ENCODE measurements at regions of chr1 and their contacts with region 1.

Region 1: GRCh38 chr1:18902523-18903290 is at the start of gene ALDH4A1:
- DNase-seq: peak; percentile 86 to 96
- ATAC-seq: peak; percentile 93 to 98 (median 94)
- H3K4me3 ChIP-seq: peak within 1 kb of the TSS; percentile 70
- H3K4me3 Mint-ChIP-seq: peak within 1 kb of the TSS; percentile 96
- H3K27ac ChIP-seq: peak within 1 kb of the TSS; percentile 91
- H3K27ac Mint-ChIP-seq: peak within 1 kb of the TSS; percentile 90 to 95
- H3K4me1 ChIP-seq: peaks cover 28% of the 10 kb centered on the region
- H3K4me1 Mint-ChIP-seq: peaks cover 25 to 28% of the 10 kb centered on the region in 2 donors
- H3K27me3 ChIP-seq: no peaks in the 10 kb centered on the region
- H3K27me3 Mint-ChIP-seq: no peaks in the 10 kb centered on the region
- CTCF ChIP-seq: no peak
- total RNA-seq, gene ALDH4A1: 3.4 to 4.1 (median 3.7) TPM

Region 2: GRCh38 chr1:18820791-18821641 is 81.7 kb before region 1 on chr1:
- intact Hi-C with region 1: no loop called
- DNase-seq: peak; percentile 54 to 73
- ATAC-seq: peak in 2 of 3 donors; percentile 54 to 62
- H3K4me3 ChIP-seq: no peak overlapping the region
- H3K4me3 Mint-ChIP-seq: no peak overlapping the region
- H3K27ac ChIP-seq: no peak overlapping the region
- H3K27ac Mint-ChIP-seq: peak overlapping the region in 1 of 2 donors; percentile 12
- H3K4me1 ChIP-seq: peaks cover 17% of the 10 kb centered on the region
- H3K4me1 Mint-ChIP-seq: peaks cover 30 to 45% of the 10 kb centered on the region in 2 donors
- H3K27me3 ChIP-seq: peaks cover 7% of the 10 kb centered on the region
- H3K27me3 Mint-ChIP-seq: peaks cover 29 to 37% of the 10 kb centered on the region in 2 donors
- CTCF ChIP-seq: peak; percentile 73

Region 3: DNA sequence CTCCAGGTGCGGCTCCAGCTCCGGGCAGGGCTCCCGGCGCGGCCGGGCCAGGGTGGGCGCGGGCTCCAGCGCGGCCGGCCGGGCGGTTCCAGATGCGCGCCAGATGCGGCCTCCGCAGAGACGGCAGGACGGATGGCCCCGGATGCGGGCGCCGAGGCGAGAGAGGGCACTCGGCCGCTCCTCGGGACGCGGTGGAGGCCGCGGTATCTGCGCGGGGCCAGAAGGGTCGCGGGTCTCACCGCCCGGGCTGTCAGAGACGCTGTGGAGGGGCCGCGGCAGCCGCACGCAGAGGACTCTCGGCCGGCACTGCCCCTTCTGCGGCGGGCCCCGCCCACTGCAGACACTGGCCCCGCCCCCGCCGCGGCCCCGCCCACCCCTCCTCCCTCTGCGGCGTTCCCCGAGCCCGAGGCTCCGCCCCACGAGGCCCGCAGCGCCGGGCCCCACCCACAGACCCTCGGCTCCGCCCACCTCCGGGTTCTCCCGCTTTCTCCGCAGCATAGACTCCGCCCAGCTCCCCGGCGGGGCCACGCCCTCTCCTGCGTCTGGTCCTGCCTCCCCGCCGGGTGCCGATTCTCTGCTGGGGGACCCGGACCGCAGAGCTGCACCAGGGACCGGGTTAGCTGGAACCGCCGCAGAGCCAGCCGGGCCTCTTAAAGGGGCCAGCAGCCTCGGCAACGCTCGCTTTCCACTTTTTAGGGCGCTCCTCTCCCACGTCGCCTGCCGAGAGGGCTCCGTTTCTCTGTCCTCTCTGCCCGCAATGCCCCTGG is 53.8 kb after region 1 on chr1 and contains the start of gene IFFO2:
- intact Hi-C with region 1: loop called (anchors 2 kb)
- DNase-seq: peak; percentile 99
- ATAC-seq: peak; percentile 79 to 93 (median 80)
- H3K4me3 ChIP-seq: peak within 1 kb of the TSS; percentile 62
- H3K4me3 Mint-ChIP-seq: peak within 1 kb of the TSS; percentile 87
- H3K27ac ChIP-seq: peak within 1 kb of the TSS; percentile 49
- H3K27ac Mint-ChIP-seq: peak within 1 kb of the TSS; percentile 85 to 100
- H3K4me1 ChIP-seq: peaks cover 52% of the 10 kb centered on the region
- H3K4me1 Mint-ChIP-seq: peaks cover 52 to 57% of the 10 kb centered on the region in 2 donors
- H3K27me3 ChIP-seq: no peaks in the 10 kb centered on the region
- H3K27me3 Mint-ChIP-seq: peaks cover 0 to 4% of the 10 kb centered on the region in 2 donors
- CTCF ChIP-seq: no peak
- total RNA-seq, gene IFFO2: 52.4 to 105 (median 66.5) TPM

Region 4: DNA sequence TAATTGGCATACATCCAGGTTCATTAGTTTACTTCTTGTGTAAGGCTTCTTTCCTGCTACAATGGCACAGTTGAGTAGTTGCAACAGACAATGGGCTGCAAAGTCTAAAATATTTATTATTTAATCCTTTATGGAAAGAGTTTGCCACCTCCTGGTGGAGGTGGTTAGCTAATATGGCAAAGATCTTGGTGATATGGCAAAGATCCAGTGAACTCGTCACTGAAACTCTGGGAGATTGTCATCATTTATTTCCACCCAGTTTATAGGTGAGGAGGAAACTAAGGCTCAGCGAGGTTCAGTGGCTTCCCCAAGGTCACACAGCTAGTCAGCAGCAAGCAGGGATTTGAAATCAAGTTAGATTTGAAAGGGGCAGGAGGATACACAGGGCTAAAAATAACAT is 69.8 kb after region 1 on chr1:
- intact Hi-C with region 1: loop called (anchors 1 kb)
- DNase-seq: peak in 1 of 2 donors; percentile 75
- ATAC-seq: peak; percentile 56 to 77 (median 73)
- H3K4me3 ChIP-seq: no peak overlapping the region
- H3K4me3 Mint-ChIP-seq: no peak overlapping the region
- H3K27ac ChIP-seq: no peak overlapping the region
- H3K27ac Mint-ChIP-seq: no peak overlapping the region
- H3K4me1 ChIP-seq: no peaks in the 10 kb centered on the region
- H3K4me1 Mint-ChIP-seq: peaks cover 0 to 4% of the 10 kb centered on the region in 2 donors
- H3K27me3 ChIP-seq: no peaks in the 10 kb centered on the region
- H3K27me3 Mint-ChIP-seq: peaks cover 5 to 8% of the 10 kb centered on the region in 2 donors
- CTCF ChIP-seq: peak; percentile 64

Measured in natural killer cell (primary cell).